Common myeloid progenitor, CD34-positive (primary cell): ENCODE measurements at regions of chr16 and their contacts with region 1.

Region 1: DNA sequence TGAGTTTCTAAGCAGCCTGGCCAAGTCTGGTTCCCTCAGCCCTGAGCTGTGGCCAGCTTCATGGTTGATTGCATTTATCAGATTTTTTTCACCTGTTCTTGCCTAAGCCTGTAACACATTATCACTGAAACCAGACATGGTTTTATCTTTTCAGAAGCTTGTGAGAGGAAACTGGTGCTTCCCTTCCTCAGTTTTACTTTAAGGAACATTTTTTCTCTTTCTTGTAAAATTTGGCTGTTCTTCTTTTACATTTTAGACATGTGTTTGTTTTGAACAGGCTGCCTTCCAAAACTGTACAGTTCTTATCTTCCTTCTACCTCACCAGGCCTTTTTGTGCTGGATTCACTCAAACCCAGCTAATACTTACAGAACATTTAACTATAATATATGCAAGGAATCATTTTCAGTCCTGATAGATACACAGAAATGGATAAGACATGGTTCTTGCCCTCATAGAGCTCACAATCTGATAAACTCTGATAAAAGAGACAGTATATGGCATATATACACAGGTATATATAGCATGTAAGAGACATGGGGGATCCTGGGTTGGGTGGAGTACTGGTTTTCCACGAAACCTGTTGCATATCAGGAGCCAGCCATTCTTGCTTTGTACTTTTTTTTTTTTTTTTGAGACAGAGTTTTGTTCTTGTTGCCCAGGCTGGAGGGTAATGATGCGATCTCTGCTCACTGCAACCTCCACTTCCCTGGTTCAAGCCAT is 44.5 kb downstream of the ZNRF1 start:
- DNase-seq: peak; percentile 96 to 100 (median 98)
- H3K4me3 ChIP-seq: peak overlapping the region in 3 of 7 experiments; percentile 49 to 63 (median 56)
- H3K27ac ChIP-seq: peak overlapping the region; percentile 90 to 95
- H3K4me1 ChIP-seq: peaks cover 26 to 85% (median 73%) of the 10 kb centered on the region in 4 experiments
- H3K27me3 ChIP-seq: no peaks in the 10 kb centered on the region

Region 2: GRCh38 chr16:75011634-75012307 is 31.6 kb before region 1 on chr16:
- CTCF ChIA-PET with region 1: interaction called, 11 read pairs
- POLR2A ChIA-PET with region 1: no interaction called
- DNase-seq: peak; percentile 63 to 92 (median 92)
- H3K4me3 ChIP-seq: peak overlapping the region in 3 of 7 experiments; percentile 6 to 17 (median 11)
- H3K27ac ChIP-seq: peak overlapping the region; percentile 46 to 71
- H3K4me1 ChIP-seq: peaks cover 16 to 49% (median 40%) of the 10 kb centered on the region in 4 experiments
- H3K27me3 ChIP-seq: no peaks in the 10 kb centered on the region

Region 3: GRCh38 chr16:75053791-75054555 is 10.6 kb after region 1 on chr16:
- CTCF ChIA-PET with region 1: interaction called, 52 read pairs
- POLR2A ChIA-PET with region 1: interaction called, 4 read pairs
- DNase-seq: peak in 2 of 3 donors; percentile 58 to 61
- H3K4me3 ChIP-seq: peak overlapping the region in 1 of 7 experiments; percentile 16
- H3K27ac ChIP-seq: peak overlapping the region; percentile 22 to 60
- H3K4me1 ChIP-seq: peaks cover 26 to 79% (median 57%) of the 10 kb centered on the region in 4 experiments
- H3K27me3 ChIP-seq: no peaks in the 10 kb centered on the region

Region 4: GRCh38 chr16:75074920-75075687 is 31.8 kb after region 1 on chr16:
- CTCF ChIA-PET with region 1: interaction called, 12 read pairs
- POLR2A ChIA-PET with region 1: interaction called, 30 read pairs
- DNase-seq: peak; percentile 97 to 100 (median 99)
- H3K4me3 ChIP-seq: peak overlapping the region in 4 of 7 experiments; percentile 2 to 48 (median 22)
- H3K27ac ChIP-seq: peak overlapping the region; percentile 61 to 80
- H3K4me1 ChIP-seq: peaks cover 20 to 97% (median 89%) of the 10 kb centered on the region in 4 experiments
- H3K27me3 ChIP-seq: no peaks in the 10 kb centered on the region